Activated T-helper 2 cell treated with anti-CD3 and anti-CD28 coated beads, Interferon-gamma antibody, Interleukin-2, Interleukin-4, amounts not matched to agents 10 μg/mL and 5 μg/mL and 100 μg/mL, durations not matched to agents 14 hours and 24 hours and 36 hours (primary cell): ENCODE measurements at regions of chr12 and their contacts with region 1.

Region 1: DNA sequence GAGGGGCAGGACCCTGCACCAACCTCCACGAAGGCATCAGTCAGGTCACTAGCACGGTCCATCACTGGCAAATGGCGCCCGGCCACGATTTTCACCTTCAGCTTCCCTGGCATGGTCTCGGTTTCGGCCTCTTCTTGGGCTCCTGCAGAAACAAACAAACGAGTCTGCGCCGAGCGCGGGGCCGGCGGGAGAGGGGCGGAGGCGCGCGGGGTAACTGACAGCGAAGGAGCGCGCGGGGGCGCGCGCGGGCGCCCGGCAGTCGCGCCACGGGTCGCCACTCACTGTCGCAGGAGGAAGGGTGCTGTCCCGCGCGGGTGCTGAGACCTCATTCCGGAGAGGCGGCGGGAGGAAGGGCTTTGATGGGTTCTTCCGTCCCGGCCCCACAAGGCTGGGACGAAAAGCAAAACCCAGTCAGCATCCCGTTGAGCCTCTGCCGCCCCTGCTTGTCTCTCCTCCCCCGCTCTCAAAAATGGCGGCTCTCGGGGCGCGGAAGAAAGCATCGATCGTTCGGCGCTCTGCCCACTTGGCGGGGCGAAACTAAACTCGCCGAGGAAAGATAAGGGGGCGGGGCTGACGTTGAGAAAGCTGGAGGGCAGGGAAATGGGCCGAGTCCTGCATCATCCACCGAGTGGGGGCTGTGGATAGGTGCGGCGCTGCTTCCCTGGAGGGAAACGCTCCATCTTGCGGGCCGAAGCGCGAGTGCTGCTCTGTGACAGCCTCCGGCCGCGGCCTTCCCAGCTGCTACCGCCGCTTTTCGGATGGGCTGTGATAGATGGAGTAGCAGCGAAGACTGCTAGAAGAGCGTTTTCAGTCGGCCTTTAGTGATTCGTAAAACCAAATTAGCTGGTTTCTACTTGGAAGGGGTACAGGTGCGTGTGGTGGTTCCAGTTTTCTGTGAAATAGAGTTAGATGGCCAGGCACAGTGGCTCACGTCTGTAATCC is at the start of gene C2CD5:
- DNase-seq: peak; percentile 94
- H3K4me3 Mint-ChIP-seq: peak within 1 kb of the TSS; percentile 94
- H3K27ac Mint-ChIP-seq: peak within 1 kb of the TSS; percentile 93
- H3K4me1 Mint-ChIP-seq: peaks cover 32% of the 10 kb centered on the region
- H3K27me3 Mint-ChIP-seq: peaks cover 13% of the 10 kb centered on the region
- total RNA-seq, gene C2CD5: 31.9 and 36.3 TPM in 2 replicates

Region 2: DNA sequence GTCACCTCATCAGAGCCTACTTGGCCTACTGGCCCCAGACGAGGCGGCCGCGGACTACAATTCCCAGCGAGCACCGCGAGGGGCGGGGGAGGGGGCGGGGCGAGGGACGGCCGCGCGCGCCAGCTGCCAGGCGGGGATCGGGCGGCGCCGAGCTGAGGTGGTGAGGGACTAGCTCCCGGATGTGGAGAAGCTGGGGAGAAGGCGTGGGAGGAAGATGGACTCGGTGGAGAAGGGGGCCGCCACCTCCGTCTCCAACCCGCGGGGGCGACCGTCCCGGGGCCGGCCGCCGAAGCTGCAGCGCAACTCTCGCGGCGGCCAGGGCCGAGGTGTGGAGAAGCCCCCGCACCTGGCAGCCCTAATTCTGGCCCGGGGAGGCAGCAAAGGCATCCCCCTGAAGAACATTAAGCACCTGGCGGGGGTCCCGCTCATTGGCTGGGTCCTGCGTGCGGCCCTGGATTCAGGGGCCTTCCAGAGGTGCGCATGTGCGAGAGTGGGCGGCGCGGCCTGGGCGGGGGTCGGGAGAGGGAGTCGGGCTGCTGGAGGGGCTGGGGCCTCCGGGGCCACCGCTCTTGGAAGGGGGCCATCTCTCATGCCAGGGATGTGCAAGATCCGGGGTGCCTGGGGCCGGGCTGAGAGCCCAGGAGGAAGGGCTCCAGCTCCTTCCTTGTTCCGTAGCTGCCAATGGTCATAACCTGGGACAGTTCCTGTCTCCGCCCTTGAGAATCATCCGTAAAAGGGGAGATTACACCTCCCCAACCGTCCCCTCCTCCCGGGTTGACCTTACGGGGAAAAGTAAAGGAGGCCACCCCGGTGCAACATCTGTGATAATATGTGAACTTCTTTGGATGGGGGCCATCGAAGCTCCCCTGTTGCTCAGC is 498.0 kb before region 1 on chr12 and contains the start of gene CMAS:
- intact Hi-C with region 1: loop called (anchors 1 kb)
- DNase-seq: peak; percentile 64
- H3K4me3 Mint-ChIP-seq: peak within 1 kb of the TSS; percentile 95
- H3K27ac Mint-ChIP-seq: peak within 1 kb of the TSS; percentile 87
- H3K4me1 Mint-ChIP-seq: peaks cover 45% of the 10 kb centered on the region
- H3K27me3 Mint-ChIP-seq: no peaks in the 10 kb centered on the region
- total RNA-seq, gene CMAS: 36.2 and 37.7 TPM in 2 replicates

Region 3: GRCh38 chr12:22215467-22216253 is 328.6 kb before region 1 on chr12:
- intact Hi-C with region 1: no loop called
- DNase-seq: no peak
- H3K4me3 Mint-ChIP-seq: no peak overlapping the region
- H3K27ac Mint-ChIP-seq: no peak overlapping the region
- H3K4me1 Mint-ChIP-seq: no peaks in the 10 kb centered on the region
- H3K27me3 Mint-ChIP-seq: no peaks in the 10 kb centered on the region

Region 4: GRCh38 chr12:22529281-22530060 is 14.8 kb before region 1 on chr12:
- intact Hi-C with region 1: loop called (anchors 2 kb)
- DNase-seq: no peak
- H3K4me3 Mint-ChIP-seq: no peak overlapping the region
- H3K27ac Mint-ChIP-seq: no peak overlapping the region
- H3K4me1 Mint-ChIP-seq: peaks cover 11% of the 10 kb centered on the region
- H3K27me3 Mint-ChIP-seq: no peaks in the 10 kb centered on the region

Region 5: DNA sequence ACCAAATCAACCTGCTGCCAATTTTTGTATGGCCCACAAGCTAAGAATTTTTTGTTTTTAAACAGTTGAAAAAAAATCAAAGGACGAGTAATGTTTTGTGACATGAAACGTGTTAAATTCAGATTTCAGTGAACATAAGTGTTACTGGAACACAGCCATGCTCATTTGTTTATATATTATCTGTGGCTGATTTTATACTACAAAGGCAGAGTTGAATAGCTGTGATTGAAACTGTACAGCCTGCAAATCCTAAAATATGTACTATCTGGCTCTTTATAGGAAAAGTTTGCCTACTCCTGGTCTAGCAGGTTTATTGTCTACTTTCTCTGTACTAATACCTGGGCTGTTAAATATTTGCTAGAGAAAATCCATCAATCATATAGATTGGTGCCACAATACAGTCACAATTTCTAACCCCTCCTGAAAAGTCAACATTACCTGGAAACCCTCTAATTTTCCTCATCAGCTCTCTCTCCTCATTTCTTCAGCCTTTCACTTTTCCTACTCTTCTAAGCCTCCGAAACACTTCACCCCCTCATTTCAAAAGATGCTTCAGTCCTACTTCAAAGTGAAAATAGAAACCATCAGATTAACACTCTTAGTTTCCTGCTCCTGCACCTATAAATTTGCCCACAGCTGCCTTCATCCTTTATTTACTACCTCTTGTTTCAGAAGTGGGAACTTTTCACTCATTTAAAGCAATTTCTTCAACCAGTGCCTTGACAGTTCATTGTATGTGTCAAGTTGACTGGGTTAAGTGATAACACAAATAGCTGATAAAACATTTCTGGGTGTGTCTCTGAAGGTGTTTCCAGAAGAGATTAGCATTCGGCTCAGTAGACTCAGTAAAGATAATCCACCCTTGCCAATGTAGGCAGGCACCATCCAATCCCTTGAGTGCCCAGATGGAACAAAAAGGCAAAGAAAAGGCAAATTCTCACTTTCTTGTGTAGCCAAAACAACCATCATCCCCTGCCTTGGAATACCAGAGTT is 18.0 kb after region 1 on chr12:
- intact Hi-C with region 1: loop called (anchors 2 kb)
- DNase-seq: no peak
- H3K4me3 Mint-ChIP-seq: no peak overlapping the region
- H3K27ac Mint-ChIP-seq: no peak overlapping the region
- H3K4me1 Mint-ChIP-seq: peaks cover 6% of the 10 kb centered on the region
- H3K27me3 Mint-ChIP-seq: peaks cover 18% of the 10 kb centered on the region

Region 6: GRCh38 chr12:22624870-22625761 is 80.8 kb after region 1 on chr12 and contains the start of gene ETNK1:
- intact Hi-C with region 1: loop called (anchors 1 kb)
- DNase-seq: peak; percentile 83
- H3K4me3 Mint-ChIP-seq: peak within 1 kb of the TSS; percentile 90
- H3K27ac Mint-ChIP-seq: peak within 1 kb of the TSS; percentile 89
- H3K4me1 Mint-ChIP-seq: peaks cover 33% of the 10 kb centered on the region
- H3K27me3 Mint-ChIP-seq: peaks cover 15% of the 10 kb centered on the region
- total RNA-seq, gene ETNK1: 120 and 122 TPM in 2 replicates

Region 7: GRCh38 chr12:22684140-22685118 is 140.1 kb after region 1 on chr12:
- intact Hi-C with region 1: loop called (anchors 5 kb)
- DNase-seq: no peak
- H3K4me3 Mint-ChIP-seq: no peak overlapping the region
- H3K27ac Mint-ChIP-seq: peak overlapping the region; percentile 7
- H3K4me1 Mint-ChIP-seq: peaks cover 25% of the 10 kb centered on the region
- H3K27me3 Mint-ChIP-seq: no peaks in the 10 kb centered on the region

Region 8: DNA sequence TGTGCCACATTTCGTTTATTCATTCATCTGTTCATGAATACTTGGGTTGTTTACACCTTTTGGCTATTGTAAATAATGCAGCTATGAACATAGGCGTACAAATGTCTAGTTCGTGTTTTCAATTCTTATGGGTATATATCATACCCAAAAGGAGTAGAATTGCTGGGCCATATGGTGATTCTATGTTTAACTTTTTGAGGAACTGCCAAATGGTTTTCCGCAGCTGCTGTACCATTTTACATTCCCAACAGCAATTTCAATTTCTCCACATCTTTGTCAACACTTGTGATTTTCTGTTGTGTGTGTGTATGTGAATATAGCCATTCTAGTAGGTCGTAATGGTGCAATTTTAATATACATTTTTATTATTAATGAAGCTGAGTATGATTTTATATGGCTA is 406.9 kb after region 1 on chr12:
- intact Hi-C with region 1: no loop called
- DNase-seq: no peak
- H3K4me3 Mint-ChIP-seq: no peak overlapping the region
- H3K27ac Mint-ChIP-seq: no peak overlapping the region
- H3K4me1 Mint-ChIP-seq: no peaks in the 10 kb centered on the region
- H3K27me3 Mint-ChIP-seq: no peaks in the 10 kb centered on the region